Naive thymus-derived CD4-positive, alpha-beta T cell (primary cell): ENCODE measurements at regions of chr9 and their contacts with region 1.

Region 1: DNA sequence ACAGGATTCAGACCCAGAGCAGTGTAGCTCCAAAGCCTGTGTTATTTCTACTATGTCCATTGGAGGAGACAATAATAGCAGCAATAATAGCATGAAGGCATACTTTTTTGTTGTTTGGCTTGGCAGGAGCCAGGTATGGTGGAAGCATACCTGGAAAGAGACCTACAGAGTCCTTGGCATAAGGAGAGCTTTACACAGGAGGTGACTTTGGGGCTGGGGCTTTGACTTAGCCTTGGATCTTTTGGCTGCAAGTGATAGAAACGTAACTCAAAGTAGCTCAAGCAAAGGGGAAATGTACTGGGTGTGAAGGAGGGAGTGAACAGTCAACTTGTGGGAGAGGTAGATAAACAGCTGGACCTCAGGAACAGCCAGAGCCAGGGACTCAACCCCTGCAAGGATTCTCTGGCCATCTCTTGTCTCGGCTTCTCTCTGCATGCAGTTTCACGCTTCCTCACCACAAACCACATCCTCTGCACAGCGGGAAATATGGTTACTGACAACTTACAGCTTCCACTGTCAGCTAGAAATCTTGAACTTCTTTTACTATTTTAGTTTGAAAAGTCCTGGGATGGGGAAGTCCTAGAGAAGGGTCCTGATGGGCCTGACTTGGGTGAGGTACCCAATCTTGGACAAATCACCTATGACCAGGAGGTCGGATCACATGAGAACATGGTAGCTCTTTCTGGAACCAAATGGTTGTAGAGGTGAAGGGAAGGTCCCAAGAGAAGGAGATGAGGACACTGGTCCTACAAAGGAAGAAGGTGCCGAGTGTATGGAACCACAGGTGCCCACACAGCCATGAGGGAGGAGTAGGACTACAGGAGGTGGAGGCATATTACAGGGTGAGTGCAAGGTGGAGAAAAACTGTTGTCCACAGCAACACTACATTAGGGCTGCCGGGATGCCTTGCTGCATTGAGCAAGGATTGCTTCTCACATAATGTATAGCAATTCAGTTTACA is 47.0 kb upstream of the TGFBR1 start:
- DNase-seq: peak; percentile 16 to 86 (median 82)
- ATAC-seq: peak; percentile 74
- H3K4me3 ChIP-seq: peak overlapping the region; percentile 56
- H3K4me3 Mint-ChIP-seq: peak overlapping the region; percentile 79 to 92 (median 89)
- H3K27ac ChIP-seq: peak overlapping the region; percentile 25
- H3K27ac Mint-ChIP-seq: peak overlapping the region; percentile 21 to 95 (median 75)
- H3K4me1 ChIP-seq: peaks cover 62 to 76% of the 10 kb centered on the region in 2 donors
- H3K4me1 Mint-ChIP-seq: peaks cover 62 to 90% (median 78%) of the 10 kb centered on the region in 7 donors
- H3K27me3 ChIP-seq: no peaks in the 10 kb centered on the region
- H3K27me3 Mint-ChIP-seq: peaks cover 0 to 8% (median 0%) of the 10 kb centered on the region in 5 donors

Region 2: GRCh38 chr9:98796364-98797101 is 261.4 kb before region 1 on chr9 and contains the start of gene ANKS6:
- CTCF ChIA-PET with region 1: no interaction called
- POLR2A ChIA-PET with region 1: no interaction called
- intact Hi-C with region 1: loop called in 1 of 2 experiments (anchors 5 kb)
- DNase-seq: peak; percentile 67 to 95 (median 84)
- ATAC-seq: peak; percentile 98
- H3K4me3 ChIP-seq: peak within 1 kb of the TSS; percentile 87
- H3K4me3 Mint-ChIP-seq: peak within 1 kb of the TSS; percentile 87 to 94 (median 90)
- H3K27ac ChIP-seq: peak within 1 kb of the TSS; percentile 74
- H3K27ac Mint-ChIP-seq: peak within 1 kb of the TSS; percentile 63 to 90 (median 87)
- H3K4me1 ChIP-seq: peaks cover 6 to 12% of the 10 kb centered on the region in 2 donors
- H3K4me1 Mint-ChIP-seq: peaks cover 21 to 37% (median 32%) of the 10 kb centered on the region in 7 donors
- H3K27me3 ChIP-seq: no peaks in the 10 kb centered on the region
- H3K27me3 Mint-ChIP-seq: peaks cover 0 to 23% (median 0%) of the 10 kb centered on the region in 5 donors
- total RNA-seq, gene ANKS6: 8.1 to 18.4 (median 13.5) TPM

Region 3: DNA sequence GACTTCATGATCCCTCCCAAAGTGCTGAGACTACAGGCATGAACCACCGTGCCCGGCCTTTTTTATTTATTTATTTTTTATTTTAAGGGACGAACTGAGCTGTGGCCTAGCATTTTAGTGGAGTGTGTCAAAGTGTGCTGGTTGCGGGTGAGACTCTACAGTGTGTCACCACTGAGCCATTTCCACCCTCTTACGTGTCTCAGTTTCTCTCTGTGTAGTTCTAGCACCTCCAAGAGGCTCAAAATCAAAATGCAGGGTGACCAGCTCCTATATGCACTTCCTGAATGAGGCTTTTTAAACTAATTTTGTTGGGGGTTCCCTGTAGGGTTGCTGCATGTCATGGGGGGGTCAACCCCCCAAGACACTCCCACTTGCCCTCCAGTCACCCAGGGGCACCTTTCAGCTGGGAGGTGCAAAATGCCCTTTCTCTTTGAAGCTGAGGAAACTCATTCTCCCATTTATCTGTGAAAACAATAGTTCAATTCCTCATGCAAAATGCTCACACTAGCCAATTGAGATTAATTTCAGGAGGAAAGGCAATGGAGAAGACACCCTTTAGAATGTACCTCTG is 44.9 kb before region 1 on chr9:
- CTCF ChIA-PET with region 1: interaction called, 4 read pairs
- POLR2A ChIA-PET with region 1: interaction called, 6 read pairs
- intact Hi-C with region 1: loop called in 1 of 2 experiments (anchors 1 kb)
- DNase-seq: peak in 2 of 9 donors; percentile 18 to 30
- ATAC-seq: peak; percentile 63
- H3K4me3 ChIP-seq: no peak overlapping the region
- H3K4me3 Mint-ChIP-seq: peak overlapping the region; percentile 33 to 86 (median 78)
- H3K27ac ChIP-seq: peak overlapping the region; percentile 41
- H3K27ac Mint-ChIP-seq: peak overlapping the region in 8 of 9 donors; percentile 82 to 97 (median 92)
- H3K4me1 ChIP-seq: peaks cover 19 to 21% of the 10 kb centered on the region in 2 donors
- H3K4me1 Mint-ChIP-seq: peaks cover 15 to 38% (median 24%) of the 10 kb centered on the region in 7 donors
- H3K27me3 ChIP-seq: no peaks in the 10 kb centered on the region
- H3K27me3 Mint-ChIP-seq: no peaks in the 10 kb centered on the region

Region 4: GRCh38 chr9:99076483-99077171 is 18.7 kb after region 1 on chr9:
- CTCF ChIA-PET with region 1: no interaction called
- POLR2A ChIA-PET with region 1: interaction called, 17 read pairs
- intact Hi-C with region 1: loop called (anchors 1 kb)
- DNase-seq: peak in 7 of 9 donors; percentile 17 to 58 (median 42)
- ATAC-seq: peak; percentile 95
- H3K4me3 ChIP-seq: no peak overlapping the region
- H3K4me3 Mint-ChIP-seq: peak overlapping the region; percentile 1 to 79 (median 62)
- H3K27ac ChIP-seq: peak overlapping the region; percentile 18
- H3K27ac Mint-ChIP-seq: peak overlapping the region; percentile 53 to 93 (median 81)
- H3K4me1 ChIP-seq: peaks cover 17 to 26% of the 10 kb centered on the region in 2 donors
- H3K4me1 Mint-ChIP-seq: peaks cover 35 to 75% (median 60%) of the 10 kb centered on the region in 7 donors
- H3K27me3 ChIP-seq: no peaks in the 10 kb centered on the region
- H3K27me3 Mint-ChIP-seq: peaks cover 0 to 3% (median 0%) of the 10 kb centered on the region in 5 donors

Region 5: GRCh38 chr9:99104459-99105151 is 46.7 kb after region 1 on chr9 and contains the start of gene TGFBR1:
- CTCF ChIA-PET with region 1: interaction called, 4 read pairs
- POLR2A ChIA-PET with region 1: interaction called, 21 read pairs
- intact Hi-C with region 1: loop called (anchors 1 kb)
- DNase-seq: peak; percentile 87 to 98 (median 89)
- ATAC-seq: peak; percentile 91
- H3K4me3 ChIP-seq: peak within 1 kb of the TSS; percentile 73
- H3K4me3 Mint-ChIP-seq: peak within 1 kb of the TSS; percentile 90 to 97 (median 94)
- H3K27ac ChIP-seq: peak within 1 kb of the TSS; percentile 74
- H3K27ac Mint-ChIP-seq: peak within 1 kb of the TSS; percentile 78 to 99 (median 95)
- H3K4me1 ChIP-seq: peaks cover 43 to 49% of the 10 kb centered on the region in 2 donors
- H3K4me1 Mint-ChIP-seq: peaks cover 36 to 65% (median 59%) of the 10 kb centered on the region in 7 donors
- H3K27me3 ChIP-seq: no peaks in the 10 kb centered on the region
- H3K27me3 Mint-ChIP-seq: no peaks in the 10 kb centered on the region
- total RNA-seq, gene TGFBR1: 20.6 to 95.5 (median 29.5) TPM

Region 6: DNA sequence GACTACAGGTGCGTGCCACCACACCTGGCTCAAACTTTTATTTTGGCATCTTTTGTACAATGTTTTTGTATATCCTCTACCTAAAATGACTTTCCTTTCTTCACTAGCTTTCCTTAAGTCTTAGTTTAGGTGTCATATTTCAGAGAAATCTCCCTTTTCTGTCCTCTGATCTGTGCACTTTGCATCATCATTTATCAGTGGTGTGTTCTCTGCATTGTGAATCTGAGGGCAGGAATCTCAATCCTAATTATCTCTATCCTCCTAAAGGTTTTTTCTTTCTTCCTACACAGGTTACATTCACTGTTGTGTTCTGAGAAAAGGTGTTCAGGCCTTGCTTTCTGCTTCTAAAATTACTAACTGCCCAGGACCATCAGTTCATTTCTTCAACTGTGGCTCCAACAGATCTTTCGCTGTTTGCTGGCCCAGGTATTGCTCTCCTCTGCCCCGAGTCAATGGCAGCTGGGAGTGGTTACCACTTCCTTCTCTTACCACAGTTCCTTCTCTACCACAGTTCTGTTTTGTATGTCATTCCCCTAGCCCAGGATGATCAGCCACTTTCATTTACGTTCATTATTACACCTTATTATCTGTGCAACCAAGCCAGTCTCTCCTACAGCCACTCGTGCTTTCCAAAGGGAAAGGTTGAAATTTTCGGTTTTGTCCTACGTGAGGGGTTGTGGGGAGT is 61.0 kb after region 1 on chr9:
- CTCF ChIA-PET with region 1: interaction called, 3 read pairs
- POLR2A ChIA-PET with region 1: interaction called, 17 read pairs
- intact Hi-C with region 1: loop called (anchors 1 kb)
- DNase-seq: peak in 8 of 9 donors; percentile 40 to 79 (median 70)
- ATAC-seq: peak; percentile 99
- H3K4me3 ChIP-seq: peak overlapping the region; percentile 39
- H3K4me3 Mint-ChIP-seq: peak overlapping the region; percentile 69 to 92 (median 82)
- H3K27ac ChIP-seq: peak overlapping the region; percentile 62
- H3K27ac Mint-ChIP-seq: peak overlapping the region; percentile 39 to 96 (median 86)
- H3K4me1 ChIP-seq: peaks cover 59 to 76% of the 10 kb centered on the region in 2 donors
- H3K4me1 Mint-ChIP-seq: peaks cover 57 to 97% (median 89%) of the 10 kb centered on the region in 7 donors
- H3K27me3 ChIP-seq: no peaks in the 10 kb centered on the region
- H3K27me3 Mint-ChIP-seq: no peaks in the 10 kb centered on the region

Region 7: GRCh38 chr9:99720455-99721050 is 662.6 kb after region 1 on chr9:
- CTCF ChIA-PET with region 1: no interaction called
- POLR2A ChIA-PET with region 1: no interaction called
- intact Hi-C with region 1: loop called in 1 of 2 experiments (anchors 10 kb)
- DNase-seq: peak in 6 of 9 donors; percentile 19 to 48 (median 36)
- ATAC-seq: peak; percentile 73
- H3K4me3 ChIP-seq: peak overlapping the region; percentile 51
- H3K4me3 Mint-ChIP-seq: peak overlapping the region; percentile 74 to 95 (median 86)
- H3K27ac ChIP-seq: peak overlapping the region; percentile 64
- H3K27ac Mint-ChIP-seq: peak overlapping the region; percentile 86 to 97 (median 94)
- H3K4me1 ChIP-seq: peaks cover 4 to 29% of the 10 kb centered on the region in 2 donors
- H3K4me1 Mint-ChIP-seq: peaks cover 17 to 42% (median 32%) of the 10 kb centered on the region in 7 donors
- H3K27me3 ChIP-seq: no peaks in the 10 kb centered on the region
- H3K27me3 Mint-ChIP-seq: peaks cover 0 to 2% (median 0%) of the 10 kb centered on the region in 5 donors